ENCODE measurements at regions of chr14 and their contacts with region 1.

Region 1: GRCh38 chr14:65229751-65230749 is 127.7 kb upstream of the MAX start:
- DNase-seq: no peak
- ATAC-seq: peak; percentile 32
- H3K4me3 Mint-ChIP-seq: peak overlapping the region; percentile 86
- H3K27ac Mint-ChIP-seq: peak overlapping the region; percentile 87
- H3K4me1 Mint-ChIP-seq: peaks cover 64% of the 10 kb centered on the region
- H3K27me3 Mint-ChIP-seq: no peaks in the 10 kb centered on the region
- CTCF ChIP-seq: no peak

Region 2: GRCh38 chr14:65179918-65180724 is 49.9 kb before region 1 on chr14:
- CTCF ChIA-PET with region 1: no interaction called
- POLR2A ChIA-PET with region 1: no interaction called
- intact Hi-C with region 1: loop called (anchors 1 kb)
- DNase-seq: peak; percentile 46
- ATAC-seq: peak; percentile 93
- H3K4me3 Mint-ChIP-seq: peak overlapping the region; percentile 71
- H3K27ac Mint-ChIP-seq: peak overlapping the region; percentile 86
- H3K4me1 Mint-ChIP-seq: peaks cover 37% of the 10 kb centered on the region
- H3K27me3 Mint-ChIP-seq: no peaks in the 10 kb centered on the region
- CTCF ChIP-seq: no peak

Region 3: GRCh38 chr14:65255536-65256461 is 25.7 kb after region 1 on chr14:
- CTCF ChIA-PET with region 1: no interaction called
- POLR2A ChIA-PET with region 1: interaction called, 3 read pairs
- intact Hi-C with region 1: loop called (anchors 2 kb)
- DNase-seq: no peak
- ATAC-seq: peak; percentile 31
- H3K4me3 Mint-ChIP-seq: no peak overlapping the region
- H3K27ac Mint-ChIP-seq: peak overlapping the region; percentile 27
- H3K4me1 Mint-ChIP-seq: peaks cover 31% of the 10 kb centered on the region
- H3K27me3 Mint-ChIP-seq: no peaks in the 10 kb centered on the region
- CTCF ChIP-seq: no peak

Region 4: DNA sequence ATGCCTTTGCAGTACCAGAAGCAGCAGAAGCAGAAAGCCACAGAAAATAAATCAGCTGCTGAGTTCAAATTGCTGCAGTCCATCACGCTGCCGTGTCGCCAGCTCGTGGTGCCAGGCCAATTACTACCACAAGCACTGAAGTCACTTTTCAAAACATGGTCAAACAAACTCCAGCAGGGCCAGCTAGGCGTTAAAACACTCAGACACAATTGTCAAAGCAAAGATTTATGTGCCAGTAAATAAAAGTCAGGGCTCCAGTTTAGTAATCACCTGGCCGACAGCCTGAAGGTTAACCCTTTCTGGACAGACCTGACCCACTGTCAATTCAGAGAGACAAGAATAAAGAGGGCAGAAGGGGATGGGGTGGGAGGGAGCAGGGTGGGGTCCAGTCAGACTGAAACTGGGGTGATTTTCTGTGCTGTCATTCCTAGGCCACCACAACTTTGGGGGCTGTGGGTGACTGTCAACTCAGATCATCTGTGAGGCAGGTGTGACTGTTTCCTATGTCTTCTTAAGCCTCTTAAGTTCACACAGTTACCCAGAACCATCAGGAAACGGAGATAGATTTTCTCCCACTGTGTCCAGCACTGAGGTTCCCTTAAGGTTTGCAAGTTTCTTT is 72.6 kb after region 1 on chr14:
- CTCF ChIA-PET with region 1: interaction called, 3 read pairs
- POLR2A ChIA-PET with region 1: interaction called, 4 read pairs
- intact Hi-C with region 1: loop called (anchors 5 kb)
- DNase-seq: no peak
- ATAC-seq: peak; percentile 40
- H3K4me3 Mint-ChIP-seq: peak overlapping the region; percentile 48
- H3K27ac Mint-ChIP-seq: peak overlapping the region; percentile 96
- H3K4me1 Mint-ChIP-seq: peaks cover 79% of the 10 kb centered on the region
- H3K27me3 Mint-ChIP-seq: no peaks in the 10 kb centered on the region
- CTCF ChIP-seq: no peak

Region 5: DNA sequence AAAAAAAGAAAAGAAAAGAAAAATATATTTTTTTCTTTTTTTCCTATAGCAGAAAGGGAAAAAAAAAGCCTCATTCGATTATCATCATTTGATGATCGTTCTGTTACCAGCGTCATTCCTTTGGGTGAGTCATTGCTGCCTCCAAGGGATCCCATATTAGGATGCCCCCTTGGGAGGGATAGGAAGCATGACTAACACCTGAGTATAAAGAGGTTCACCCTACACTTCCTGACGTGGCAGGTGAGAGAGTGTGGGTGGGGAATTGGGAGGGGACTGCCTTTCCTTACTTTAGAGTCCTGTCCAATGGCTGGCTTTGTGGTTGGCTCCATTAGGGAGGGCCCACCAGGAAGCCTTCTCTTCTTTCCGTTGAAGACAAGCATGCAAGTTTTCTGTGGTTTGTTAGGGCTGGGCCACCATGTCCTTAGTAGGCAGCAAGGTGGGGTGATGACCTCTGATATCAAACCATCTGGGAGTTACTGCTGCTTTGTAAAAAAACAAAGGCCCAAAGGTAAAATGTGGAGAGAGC is 126.3 kb after region 1 on chr14:
- CTCF ChIA-PET with region 1: no interaction called
- POLR2A ChIA-PET with region 1: interaction called, 4 read pairs
- intact Hi-C with region 1: loop called (anchors 2 kb)
- DNase-seq: no peak
- ATAC-seq: no peak
- H3K4me3 Mint-ChIP-seq: no peak overlapping the region
- H3K27ac Mint-ChIP-seq: peak overlapping the region; percentile 71
- H3K4me1 Mint-ChIP-seq: peaks cover 87% of the 10 kb centered on the region
- H3K27me3 Mint-ChIP-seq: no peaks in the 10 kb centered on the region
- CTCF ChIP-seq: no peak

Region 6: GRCh38 chr14:65824285-65824977 is 594.4 kb after region 1 on chr14:
- CTCF ChIA-PET with region 1: interaction called, 5 read pairs
- POLR2A ChIA-PET with region 1: no interaction called
- intact Hi-C with region 1: loop called (anchors 1 kb)
- DNase-seq: no peak
- ATAC-seq: peak; percentile 99
- H3K4me3 Mint-ChIP-seq: no peak overlapping the region
- H3K27ac Mint-ChIP-seq: no peak overlapping the region
- H3K4me1 Mint-ChIP-seq: peaks cover 1% of the 10 kb centered on the region
- H3K27me3 Mint-ChIP-seq: peaks cover 5% of the 10 kb centered on the region
- CTCF ChIP-seq: peak; percentile 82